OCI-LY7 (cell line): ENCODE measurements at regions of chr7 and their contacts with region 1.

Region 1: GRCh38 chr7:11212080-11212711 is 238.5 kb downstream of the PHF14 start:
- DNase-seq: peak; percentile 69
- H3K4me3 ChIP-seq: no peak overlapping the region
- H3K27ac ChIP-seq: no peak overlapping the region
- H3K4me1 ChIP-seq: no peaks in the 10 kb centered on the region
- CTCF ChIP-seq: peak; percentile 92

Region 2: DNA sequence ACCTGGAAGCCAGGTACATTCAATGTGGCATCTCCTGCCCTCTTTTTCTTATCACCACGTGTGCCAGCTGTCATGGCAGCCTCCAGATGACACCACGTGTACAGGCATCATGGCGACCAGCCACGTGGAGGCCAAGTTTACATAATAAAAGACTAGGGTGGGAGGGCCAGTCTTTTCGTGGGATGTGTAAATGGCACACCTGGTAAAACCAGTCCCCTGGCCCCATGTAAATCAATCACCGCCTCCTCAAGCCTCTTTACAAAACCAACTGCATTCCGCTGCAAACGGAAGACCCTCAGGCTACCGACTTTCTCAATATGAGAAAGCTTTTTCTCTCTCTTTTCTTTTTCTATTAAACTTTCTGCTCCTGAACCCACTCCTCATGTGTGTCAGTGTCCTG is 303.6 kb before region 1 on chr7:
- CTCF ChIA-PET with region 1: no interaction called
- POLR2A ChIA-PET with region 1: no interaction called
- intact Hi-C with region 1: loop called (anchors 10 kb)
- DNase-seq: no peak
- H3K4me3 ChIP-seq: no peak overlapping the region
- H3K27ac ChIP-seq: no peak overlapping the region
- H3K4me1 ChIP-seq: no peaks in the 10 kb centered on the region
- CTCF ChIP-seq: no peak

Region 3: GRCh38 chr7:11130012-11130411 is 82.2 kb before region 1 on chr7:
- CTCF ChIA-PET with region 1: no interaction called
- POLR2A ChIA-PET with region 1: no interaction called
- intact Hi-C with region 1: no loop called
- DNase-seq: no peak
- H3K4me3 ChIP-seq: no peak overlapping the region
- H3K27ac ChIP-seq: no peak overlapping the region
- H3K4me1 ChIP-seq: no peaks in the 10 kb centered on the region
- CTCF ChIP-seq: no peak